PC-9 (cell line): ENCODE measurements at regions of chr10 and their contacts with region 1.

Region 1: GRCh38 chr10:32005050-32005449 is 51.2 kb downstream of the KIF5B start:
- DNase-seq: peak; percentile 35 to 50
- H3K4me3 ChIP-seq: no peak overlapping the region
- H3K27ac ChIP-seq: no peak overlapping the region
- H3K4me1 ChIP-seq: no peaks in the 10 kb centered on the region
- H3K27me3 ChIP-seq: no peaks in the 10 kb centered on the region
- CTCF ChIP-seq: peak; percentile 65

Region 2: DNA sequence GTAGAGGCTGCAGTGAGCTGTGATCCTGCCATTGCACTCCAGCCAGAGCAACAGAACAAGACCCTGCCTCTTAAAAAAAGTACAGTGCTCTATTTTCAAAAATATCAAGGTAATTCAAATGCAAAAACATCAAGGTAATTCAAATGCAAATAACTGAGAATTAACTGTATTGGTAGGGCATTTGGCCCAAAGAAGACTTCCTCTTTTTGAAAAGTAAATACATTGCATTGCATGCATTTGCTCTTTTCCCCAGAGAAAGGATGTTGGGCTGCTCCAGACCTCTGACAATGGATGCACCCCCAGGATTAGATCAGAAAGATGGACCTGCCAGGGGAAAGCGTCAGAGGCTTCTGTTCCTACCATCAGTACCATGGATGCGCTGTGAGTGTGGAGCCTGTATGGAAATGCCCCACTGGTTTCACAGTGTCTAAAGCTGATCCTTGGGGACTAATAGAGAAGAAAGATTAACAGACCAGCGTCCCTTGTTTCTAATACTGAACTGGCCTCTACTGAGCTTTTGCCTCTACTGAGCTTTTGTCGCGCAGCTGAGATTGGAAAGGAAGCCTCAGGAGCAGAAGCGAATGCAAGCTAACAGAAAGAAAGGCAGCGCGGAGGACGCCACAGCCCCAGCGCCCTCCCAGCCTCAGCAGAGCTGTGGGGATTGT is 1282.0 kb before region 1 on chr10:
- CTCF ChIA-PET with region 1: no interaction called
- POLR2A ChIA-PET with region 1: no interaction called
- intact Hi-C with region 1: loop called (anchors 10 kb)
- DNase-seq: no peak
- H3K4me3 ChIP-seq: no peak overlapping the region
- H3K27ac ChIP-seq: no peak overlapping the region
- H3K4me1 ChIP-seq: 0 out of 2 replicates have a peak, but pooled peaks cover 4% of the 10 kb centered on the region
- H3K27me3 ChIP-seq: no peaks in the 10 kb centered on the region
- CTCF ChIP-seq: no peak

Region 3: GRCh38 chr10:31836569-31837406 is 168.3 kb before region 1 on chr10:
- CTCF ChIA-PET with region 1: interaction called, 12 read pairs
- POLR2A ChIA-PET with region 1: no interaction called
- intact Hi-C with region 1: no loop called
- DNase-seq: peak in 1 of 2 experiments; percentile 7
- H3K4me3 ChIP-seq: no peak overlapping the region
- H3K27ac ChIP-seq: no peak overlapping the region
- H3K4me1 ChIP-seq: no peaks in the 10 kb centered on the region
- H3K27me3 ChIP-seq: no peaks in the 10 kb centered on the region
- CTCF ChIP-seq: peak; percentile 60

Region 4: DNA sequence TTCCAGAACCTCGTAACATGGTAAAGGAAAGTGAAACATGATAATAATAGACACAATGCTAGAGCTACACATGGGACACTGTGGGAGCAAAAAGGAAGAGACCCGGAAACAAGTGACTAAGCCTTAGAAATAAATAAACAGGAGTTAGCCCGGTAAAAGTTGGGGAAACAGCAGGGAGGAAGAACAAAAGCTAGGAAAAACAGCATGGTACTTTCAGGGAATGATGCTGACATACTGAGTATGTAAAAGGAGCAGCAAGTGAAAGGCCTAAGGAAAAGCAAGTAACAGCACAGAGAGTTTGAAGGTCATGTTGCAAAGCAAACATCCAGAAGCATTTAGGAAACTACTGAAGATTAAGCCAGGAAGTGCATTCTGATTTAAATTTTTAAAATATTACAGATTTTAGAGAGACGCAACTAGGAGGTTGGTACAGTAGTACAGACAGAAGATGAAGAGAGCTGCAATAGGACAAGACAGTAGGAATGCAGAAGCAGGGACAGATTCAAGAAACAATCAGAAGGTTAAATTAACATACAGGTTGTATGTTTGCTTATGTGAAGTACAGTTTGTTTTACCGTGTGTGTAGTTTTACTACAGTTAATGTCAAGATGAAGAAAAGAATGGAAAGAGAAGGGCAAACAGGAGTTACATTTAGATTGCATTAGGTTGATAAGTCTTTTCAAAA is 140.1 kb before region 1 on chr10:
- CTCF ChIA-PET with region 1: interaction called, 7 read pairs
- POLR2A ChIA-PET with region 1: no interaction called
- intact Hi-C with region 1: loop called (anchors 5 kb)
- DNase-seq: no peak
- H3K4me3 ChIP-seq: no peak overlapping the region
- H3K27ac ChIP-seq: 0 out of 2 replicates have a peak overlapping the region, but pooled peaks have one; percentile 23
- H3K4me1 ChIP-seq: 0 out of 2 replicates have a peak, but pooled peaks cover 6% of the 10 kb centered on the region
- H3K27me3 ChIP-seq: no peaks in the 10 kb centered on the region
- CTCF ChIP-seq: no peak

Region 5: DNA sequence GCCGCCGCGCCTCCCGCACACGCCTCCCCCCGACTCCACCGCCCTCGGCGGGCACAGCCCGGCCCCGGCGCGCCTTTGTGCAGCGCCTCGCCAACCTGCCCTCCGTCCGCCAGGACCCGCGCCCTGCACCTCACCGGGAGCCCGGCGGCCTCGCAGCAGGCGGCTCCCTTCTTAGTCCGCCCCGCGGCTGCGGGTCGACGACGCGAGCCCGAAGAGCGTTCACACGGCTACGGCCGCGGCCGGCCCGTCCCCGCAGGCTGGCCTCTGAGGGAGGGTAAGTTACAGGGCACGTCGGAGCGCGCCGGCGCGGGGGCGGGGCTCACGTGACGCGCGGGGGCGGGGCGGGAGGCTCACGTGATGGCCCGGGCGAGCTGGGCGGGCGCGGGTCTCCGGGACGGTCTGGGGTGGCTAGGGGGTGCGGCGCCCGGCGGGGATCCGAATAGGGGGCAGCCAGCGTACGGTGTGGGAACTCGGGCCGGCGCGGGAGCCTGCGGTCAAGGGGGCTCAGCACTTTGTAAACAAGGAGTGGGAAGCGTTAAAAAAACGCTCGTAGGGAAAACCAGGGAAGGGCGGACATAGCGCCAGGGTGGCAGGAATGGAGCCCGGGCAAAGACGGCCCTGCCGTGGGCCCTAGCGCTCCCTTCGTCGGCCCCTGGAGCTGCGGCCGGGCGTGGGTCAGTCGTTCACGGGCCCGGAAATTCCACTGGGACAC is 76.3 kb before region 1 on chr10 and contains the start of gene ARHGAP12:
- CTCF ChIA-PET with region 1: no interaction called
- POLR2A ChIA-PET with region 1: no interaction called
- intact Hi-C with region 1: loop called (anchors 5 kb)
- DNase-seq: peak; percentile 51 to 91
- H3K4me3 ChIP-seq: peak within 1 kb of the TSS; percentile 77
- H3K27ac ChIP-seq: peak within 1 kb of the TSS; percentile 69
- H3K4me1 ChIP-seq: peaks cover 49% of the 10 kb centered on the region
- H3K27me3 ChIP-seq: no peaks in the 10 kb centered on the region
- CTCF ChIP-seq: no peak
- total RNA-seq, gene ARHGAP12: 34.3 and 51.9 TPM in 2 replicates

Region 6: DNA sequence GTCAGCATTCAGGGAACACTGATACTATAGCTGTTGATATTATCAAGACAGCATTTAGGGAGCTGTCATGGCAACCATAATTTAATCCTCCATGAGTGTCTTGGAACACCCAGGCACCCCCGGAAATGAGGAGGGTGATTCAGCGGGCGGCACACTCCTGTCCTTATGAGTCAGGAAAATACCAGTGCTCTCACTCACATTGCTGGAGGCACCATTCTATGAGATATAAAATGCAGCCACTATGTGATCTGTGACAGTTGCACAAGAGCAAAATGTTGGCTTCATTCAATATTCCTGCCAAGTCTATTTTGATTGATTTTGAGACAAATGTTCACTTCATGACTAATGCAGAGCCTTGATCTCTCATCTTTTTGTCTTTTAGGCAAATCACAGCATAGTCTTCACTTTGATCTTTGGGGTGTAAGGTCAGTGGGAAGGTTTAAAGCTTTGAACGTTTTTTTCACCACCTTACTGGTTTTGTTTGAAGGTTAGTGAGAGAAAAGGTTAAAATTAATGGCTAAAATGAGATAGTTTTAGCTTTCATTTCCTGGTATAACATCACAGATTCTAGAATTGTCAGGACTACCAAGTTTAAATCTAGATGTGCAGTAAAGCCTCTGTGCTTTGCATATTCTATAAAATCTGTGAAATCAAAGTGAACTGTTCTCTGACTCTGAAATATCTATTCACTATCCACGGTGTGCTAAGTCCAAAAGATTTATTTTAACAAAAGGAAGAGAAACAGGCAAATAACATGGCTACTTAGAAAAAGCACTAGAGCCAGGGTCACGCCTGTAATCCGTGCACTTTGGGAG is 64.0 kb before region 1 on chr10:
- CTCF ChIA-PET with region 1: no interaction called
- POLR2A ChIA-PET with region 1: no interaction called
- intact Hi-C with region 1: loop called (anchors 5 kb)
- DNase-seq: peak; percentile 91 to 95
- H3K4me3 ChIP-seq: peak overlapping the region; percentile 32; the same call in 1 of the 2 replicates
- H3K27ac ChIP-seq: peak overlapping the region; percentile 93
- H3K4me1 ChIP-seq: peaks cover 85% of the 10 kb centered on the region
- H3K27me3 ChIP-seq: no peaks in the 10 kb centered on the region
- CTCF ChIP-seq: no peak